GM18951 (cell line): ENCODE measurements at regions of chr3 and their contacts with region 1.

Region 1: DNA sequence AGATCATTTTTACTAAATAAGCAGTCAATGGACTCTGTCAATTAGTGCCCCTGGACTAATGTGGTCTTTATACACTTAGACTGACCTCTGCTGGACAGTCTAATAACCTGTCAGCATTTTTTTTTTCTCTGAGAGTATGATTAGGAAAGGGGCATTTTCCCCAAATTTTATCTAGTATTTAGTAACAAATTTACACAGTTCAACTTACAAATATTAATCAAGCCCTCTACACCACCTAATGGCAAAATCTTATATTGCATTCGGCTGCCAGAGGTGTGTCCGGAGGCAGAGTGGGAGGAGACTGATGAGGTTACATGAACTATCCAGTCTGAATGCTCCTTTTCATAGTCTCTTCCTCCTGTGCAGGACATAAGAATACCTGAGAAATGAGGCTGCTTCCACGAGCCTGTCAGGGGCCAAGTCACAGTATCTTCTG is 36.0 kb upstream of the COLQ start:
- POLR2A ChIP-seq: no peak

Region 2: GRCh38 chr3:15205934-15206661 is 351.4 kb before region 1 on chr3 and contains the start of gene CAPN7:
- in situ Hi-C with region 1: loop called (anchors 25 kb)
- POLR2A ChIP-seq: peak; percentile 90

Region 3: GRCh38 chr3:15659254-15659975 is 101.9 kb after region 1 on chr3:
- in situ Hi-C with region 1: no loop called
- POLR2A ChIP-seq: no peak